ENCODE measurements at regions of chr14 and their contacts with region 1.

Region 1: GRCh38 chr14:32252030-32252670 is 49.1 kb upstream of the RNU6-8 start:
- DNase-seq: peak; percentile 64
- H3K4me3 Mint-ChIP-seq: no peak overlapping the region
- H3K27ac Mint-ChIP-seq: no peak overlapping the region
- H3K4me1 Mint-ChIP-seq: no peaks in the 10 kb centered on the region
- H3K27me3 Mint-ChIP-seq: no peaks in the 10 kb centered on the region

Region 2: DNA sequence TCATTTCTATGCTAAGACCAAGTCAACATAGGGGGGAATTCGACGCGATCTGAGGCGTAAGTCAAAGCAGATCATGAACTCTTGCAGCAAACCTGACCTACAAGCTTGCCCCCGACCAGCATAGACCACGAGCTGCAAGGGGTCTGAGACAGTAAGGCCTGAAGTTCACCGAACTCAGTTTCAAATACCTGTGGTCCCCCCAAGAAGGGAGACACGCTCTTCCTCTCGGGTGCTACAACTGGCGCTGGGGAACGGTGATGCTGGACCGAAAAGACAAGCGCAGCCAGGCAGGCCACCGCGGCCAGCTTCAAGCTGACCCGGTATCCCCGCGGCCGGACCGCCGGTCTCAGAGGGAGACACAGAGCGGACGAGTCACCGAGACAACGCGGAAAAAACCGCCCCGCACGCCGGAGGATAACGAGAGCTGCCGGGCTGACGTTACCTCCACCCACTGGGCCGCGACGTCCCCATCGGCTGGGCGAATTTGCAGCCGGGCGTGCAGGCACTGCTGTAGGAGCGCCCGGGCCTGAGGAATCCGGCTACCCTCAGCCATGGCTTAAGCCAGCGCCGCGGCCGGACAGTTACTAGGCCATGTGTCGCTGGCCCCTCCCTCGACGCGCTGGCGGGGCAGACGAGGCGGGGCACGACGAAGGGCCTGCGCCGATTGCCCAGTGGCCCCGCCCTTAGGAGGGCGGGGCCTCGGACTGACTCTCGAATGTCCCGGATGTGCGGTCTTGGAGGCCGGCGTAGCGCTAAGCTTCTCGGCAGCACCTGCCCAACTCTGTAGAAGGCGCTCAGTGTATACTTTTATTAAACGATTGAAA is 795.1 kb before region 1 on chr14 and contains the start of gene DTD2:
- CTCF ChIA-PET with region 1: no interaction called
- intact Hi-C with region 1: loop called (anchors 2 kb)
- DNase-seq: peak; percentile 93
- H3K4me3 Mint-ChIP-seq: peak within 1 kb of the TSS; percentile 94
- H3K27ac Mint-ChIP-seq: peak within 1 kb of the TSS; percentile 88
- H3K4me1 Mint-ChIP-seq: peaks cover 29% of the 10 kb centered on the region
- H3K27me3 Mint-ChIP-seq: no peaks in the 10 kb centered on the region
- total RNA-seq, gene DTD2: 12.9 to 13.3 TPM

Region 3: DNA sequence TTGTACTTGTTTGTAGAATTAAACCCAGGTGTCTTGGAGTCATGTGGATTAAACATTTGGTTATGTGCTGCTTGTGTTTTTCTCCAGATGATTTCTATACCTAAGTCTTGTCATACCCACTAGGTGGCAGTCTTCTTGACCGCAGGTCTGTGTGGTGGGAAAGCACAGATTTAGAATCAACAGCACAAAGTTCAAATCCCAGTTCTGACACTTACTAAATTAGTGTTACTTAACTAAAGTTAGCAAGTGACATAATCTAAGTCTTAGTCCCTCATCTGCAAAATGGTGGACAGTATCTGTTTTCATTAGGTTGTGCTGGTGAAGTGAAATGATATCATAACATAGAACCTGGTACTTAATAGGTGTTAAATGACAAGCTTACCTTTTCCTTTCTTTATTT is 326.0 kb before region 1 on chr14:
- CTCF ChIA-PET with region 1: interaction called, 80 read pairs
- intact Hi-C with region 1: loop called (anchors 1 kb)
- DNase-seq: peak; percentile 28
- H3K4me3 Mint-ChIP-seq: no peak overlapping the region
- H3K27ac Mint-ChIP-seq: no peak overlapping the region
- H3K4me1 Mint-ChIP-seq: peaks cover 21% of the 10 kb centered on the region
- H3K27me3 Mint-ChIP-seq: no peaks in the 10 kb centered on the region

Region 4: DNA sequence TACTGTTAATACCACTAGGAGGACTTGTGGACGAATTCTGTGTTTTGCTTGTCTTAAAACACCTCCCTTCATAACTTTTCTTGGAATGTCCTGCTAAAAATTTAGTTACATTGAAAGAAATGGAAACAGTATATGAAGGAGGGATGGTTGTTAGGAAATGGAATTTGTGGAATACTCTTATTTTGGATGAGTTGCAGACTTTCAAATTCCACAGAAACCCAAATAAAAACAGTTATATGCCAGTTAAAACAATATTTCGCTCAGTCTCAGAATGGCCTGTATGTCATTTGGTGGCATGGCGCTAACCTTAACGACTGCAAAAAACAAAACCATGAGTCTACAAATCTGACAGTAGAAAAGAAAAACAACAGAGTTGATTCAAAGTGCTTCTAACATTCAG is 187.2 kb before region 1 on chr14:
- CTCF ChIA-PET with region 1: interaction called, 159 read pairs
- intact Hi-C with region 1: no loop called
- DNase-seq: no peak
- H3K4me3 Mint-ChIP-seq: no peak overlapping the region
- H3K27ac Mint-ChIP-seq: no peak overlapping the region
- H3K4me1 Mint-ChIP-seq: no peaks in the 10 kb centered on the region
- H3K27me3 Mint-ChIP-seq: peaks cover 2% of the 10 kb centered on the region

Region 5: DNA sequence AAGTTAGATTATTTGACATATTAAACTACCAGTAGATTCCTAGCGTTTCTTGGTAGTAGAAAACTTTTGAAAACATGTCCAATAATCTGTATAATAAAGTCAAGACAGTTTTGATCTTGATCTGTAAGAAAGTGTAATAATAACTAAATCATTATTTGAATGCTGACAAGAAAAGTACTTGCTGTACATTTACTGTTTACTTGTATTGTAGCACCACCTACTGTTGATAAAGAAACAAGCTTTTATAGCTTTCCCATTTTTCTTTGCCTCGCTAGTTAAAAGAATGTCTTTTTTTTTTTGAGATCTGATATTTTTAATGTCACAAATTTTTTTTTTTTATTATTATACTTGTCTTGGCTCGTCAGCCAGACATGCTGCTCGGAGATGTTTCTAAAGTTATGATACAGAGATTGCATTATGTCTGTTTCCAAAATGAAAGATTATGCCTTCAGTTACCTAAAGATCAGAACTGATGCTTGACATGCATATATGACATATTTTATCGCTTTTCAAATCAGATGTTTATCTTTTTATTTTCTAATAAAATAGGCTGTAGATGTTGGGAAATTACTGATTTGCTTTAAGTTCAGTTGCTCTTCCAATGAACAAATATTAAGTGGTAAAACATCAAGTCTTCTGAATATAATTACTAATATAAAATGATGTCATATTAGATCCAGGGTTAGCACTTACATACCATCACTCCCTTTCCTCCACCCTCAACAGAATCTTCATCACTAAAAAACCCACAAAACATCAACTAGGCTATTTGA is 217.4 kb after region 1 on chr14:
- CTCF ChIA-PET with region 1: interaction called, 5 read pairs
- intact Hi-C with region 1: loop called (anchors 1 kb)
- DNase-seq: no peak
- H3K4me3 Mint-ChIP-seq: no peak overlapping the region
- H3K27ac Mint-ChIP-seq: no peak overlapping the region
- H3K4me1 Mint-ChIP-seq: no peaks in the 10 kb centered on the region
- H3K27me3 Mint-ChIP-seq: no peaks in the 10 kb centered on the region